ENCODE measurements at regions of chr1 and their contacts with region 1.

Region 1: GRCh38 chr1:88552226-88552625 is 131.8 kb upstream of the PKN2 start:
- DNase-seq: no peak
- H3K4me3 ChIP-seq: no peak overlapping the region
- H3K4me3 Mint-ChIP-seq: no peak overlapping the region
- H3K27ac Mint-ChIP-seq: no peak overlapping the region
- H3K4me1 ChIP-seq: no peaks in the 10 kb centered on the region
- H3K4me1 Mint-ChIP-seq: no peaks in the 10 kb centered on the region
- H3K27me3 ChIP-seq: no peaks in the 10 kb centered on the region
- H3K27me3 Mint-ChIP-seq: no peaks in the 10 kb centered on the region
- CTCF ChIP-seq: peak in 1 of 2 experiments; percentile 27

Region 2: DNA sequence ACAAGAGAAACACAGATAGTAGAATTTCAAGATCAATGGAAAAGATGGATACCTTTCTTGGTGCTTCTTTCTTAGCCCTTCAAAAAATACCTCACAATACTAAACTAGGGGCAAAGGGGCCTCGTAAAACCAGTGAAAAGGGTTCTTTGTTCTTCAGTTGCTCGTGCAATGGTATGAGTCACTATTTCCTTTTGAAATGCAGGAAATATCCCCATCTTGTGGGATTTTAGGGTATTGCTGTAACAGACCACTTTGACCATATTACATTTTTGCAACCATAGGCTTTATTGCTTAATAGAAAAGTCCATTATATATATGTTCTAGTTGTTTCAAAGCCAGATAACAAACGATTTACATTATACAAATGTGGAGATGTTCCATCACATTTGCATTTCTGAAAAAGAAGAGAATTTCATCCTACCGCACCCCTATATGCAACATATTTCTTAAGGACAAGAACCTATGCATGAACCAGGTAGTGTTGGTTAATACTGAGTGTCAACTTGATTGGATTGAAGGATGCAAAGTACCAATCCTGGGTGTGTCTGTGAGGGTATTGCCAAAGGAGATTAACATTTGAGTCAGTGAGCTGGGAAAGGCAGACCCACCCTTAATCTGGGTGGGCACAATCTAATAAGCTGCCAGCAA is 43.3 kb after region 1 on chr1:
- CTCF ChIA-PET with region 1: no interaction called
- POLR2A ChIA-PET with region 1: no interaction called
- intact Hi-C with region 1: loop called (anchors 1 kb)
- DNase-seq: peak in 1 of 2 experiments; percentile 30
- H3K4me3 ChIP-seq: no peak overlapping the region
- H3K4me3 Mint-ChIP-seq: no peak overlapping the region
- H3K27ac Mint-ChIP-seq: no peak overlapping the region
- H3K4me1 ChIP-seq: no peaks in the 10 kb centered on the region
- H3K4me1 Mint-ChIP-seq: no peaks in the 10 kb centered on the region
- H3K27me3 ChIP-seq: no peaks in the 10 kb centered on the region
- H3K27me3 Mint-ChIP-seq: no peaks in the 10 kb centered on the region
- CTCF ChIP-seq: no peak

Measured in Caco-2 (cell line).